Activated CD4-positive, alpha-beta memory T cell treated with anti-CD3 and anti-CD28 coated beads for 36 hours (primary cell): ENCODE measurements at regions of chr12 and their contacts with region 1.

Region 1: GRCh38 chr12:102061560-102062418 is at the start of gene WASHC3:
- DNase-seq: peak; percentile 97
- H3K4me3 Mint-ChIP-seq: peak within 1 kb of the TSS; percentile 85
- H3K27ac Mint-ChIP-seq: peak within 1 kb of the TSS; percentile 92
- H3K4me1 Mint-ChIP-seq: peaks cover 32% of the 10 kb centered on the region
- H3K27me3 Mint-ChIP-seq: no peaks in the 10 kb centered on the region
- total RNA-seq, gene WASHC3: 39.3 to 40.1 TPM

Region 2: DNA sequence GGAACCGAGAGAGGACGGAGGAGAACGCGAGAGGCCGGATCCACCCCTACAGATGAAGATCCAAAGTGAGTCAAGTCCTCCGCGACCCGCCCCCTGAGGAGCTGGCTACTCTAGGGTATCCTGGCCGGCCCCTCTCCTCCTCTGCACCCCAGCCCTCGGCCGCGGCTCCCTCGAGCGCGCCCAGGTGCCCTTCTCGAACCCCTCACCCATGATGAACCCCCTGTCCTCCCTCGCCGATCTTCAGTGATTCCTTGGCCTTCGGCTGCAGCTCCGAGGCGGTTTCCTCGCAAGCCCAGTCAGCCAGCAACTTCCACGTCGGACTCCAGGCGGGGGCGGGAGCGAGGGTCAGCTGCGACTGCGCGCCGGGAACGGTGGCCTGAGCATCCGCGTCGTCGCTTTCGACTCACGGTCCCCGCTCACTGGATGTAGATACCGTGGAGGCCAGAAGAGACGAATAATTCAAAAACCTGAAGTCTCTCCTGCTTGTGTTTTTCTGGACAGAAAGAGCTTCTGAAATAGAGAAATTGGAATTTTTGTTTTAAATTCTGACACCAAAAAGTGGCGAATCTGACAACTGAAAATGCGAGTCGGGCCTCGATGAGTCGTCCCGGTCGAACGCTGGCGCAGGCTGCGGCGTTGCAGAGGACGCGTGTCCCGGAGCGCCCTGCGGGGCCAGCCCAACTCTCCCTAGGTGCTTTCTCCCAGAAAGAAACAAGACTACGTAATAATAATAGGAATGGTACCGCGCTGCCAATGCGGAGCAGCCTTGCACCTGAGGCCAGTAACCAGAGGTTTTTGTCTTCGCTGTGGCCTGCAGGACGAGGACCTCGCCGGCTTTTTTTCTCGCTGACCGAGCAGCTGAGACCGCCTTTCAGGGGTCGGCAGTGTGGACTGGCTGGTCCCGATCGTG is 654.1 kb before region 1 on chr12 and contains the start of gene ARL1:
- CTCF ChIA-PET with region 1: no interaction called
- POLR2A ChIA-PET with region 1: no interaction called
- intact Hi-C with region 1: loop called (anchors 5 kb)
- DNase-seq: peak; percentile 86
- H3K4me3 Mint-ChIP-seq: peak within 1 kb of the TSS; percentile 99
- H3K27ac Mint-ChIP-seq: peak within 1 kb of the TSS; percentile 94
- H3K4me1 Mint-ChIP-seq: peaks cover 22% of the 10 kb centered on the region
- H3K27me3 Mint-ChIP-seq: no peaks in the 10 kb centered on the region
- total RNA-seq, gene ARL1: 63.2 to 64.1 TPM

Region 3: GRCh38 chr12:101830367-101831325 is 231.1 kb before region 1 on chr12 and contains the start of gene GNPTAB:
- CTCF ChIA-PET with region 1: no interaction called
- POLR2A ChIA-PET with region 1: no interaction called
- intact Hi-C with region 1: loop called (anchors 2 kb)
- DNase-seq: peak; percentile 97
- H3K4me3 Mint-ChIP-seq: peak within 1 kb of the TSS; percentile 96
- H3K27ac Mint-ChIP-seq: peak within 1 kb of the TSS; percentile 81
- H3K4me1 Mint-ChIP-seq: peaks cover 36% of the 10 kb centered on the region
- H3K27me3 Mint-ChIP-seq: no peaks in the 10 kb centered on the region
- total RNA-seq, gene GNPTAB: 19.6 to 20.2 TPM

Region 4: DNA sequence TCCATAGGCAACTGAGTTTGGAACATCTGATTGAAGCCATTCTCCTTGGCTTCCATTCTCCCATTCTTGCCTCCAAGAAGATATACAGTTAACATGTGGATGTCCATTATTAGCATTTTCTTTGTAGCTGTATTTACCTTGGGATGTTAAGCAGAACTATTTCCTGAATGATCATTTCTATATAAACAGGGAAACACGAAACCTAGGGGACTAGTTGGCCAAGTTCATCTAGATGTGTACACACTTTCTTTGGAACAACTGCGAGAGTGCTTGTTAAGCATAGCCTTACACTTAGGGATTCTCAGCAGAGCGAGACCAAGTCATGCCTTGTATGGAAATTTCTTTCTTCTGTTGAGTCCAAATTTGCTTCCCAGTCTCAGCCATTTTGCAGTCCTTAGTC is 142.3 kb before region 1 on chr12:
- CTCF ChIA-PET with region 1: no interaction called
- POLR2A ChIA-PET with region 1: no interaction called
- intact Hi-C with region 1: loop called (anchors 5 kb)
- DNase-seq: no peak
- H3K4me3 Mint-ChIP-seq: no peak overlapping the region
- H3K27ac Mint-ChIP-seq: no peak overlapping the region
- H3K4me1 Mint-ChIP-seq: peaks cover 6% of the 10 kb centered on the region
- H3K27me3 Mint-ChIP-seq: no peaks in the 10 kb centered on the region

Region 5: GRCh38 chr12:102016472-102016871 is 45.3 kb before region 1 on chr12:
- CTCF ChIA-PET with region 1: no interaction called
- POLR2A ChIA-PET with region 1: no interaction called
- intact Hi-C with region 1: loop called (anchors 5 kb)
- DNase-seq: no peak
- H3K4me3 Mint-ChIP-seq: no peak overlapping the region
- H3K27ac Mint-ChIP-seq: no peak overlapping the region
- H3K4me1 Mint-ChIP-seq: no peaks in the 10 kb centered on the region
- H3K27me3 Mint-ChIP-seq: no peaks in the 10 kb centered on the region

Region 6: DNA sequence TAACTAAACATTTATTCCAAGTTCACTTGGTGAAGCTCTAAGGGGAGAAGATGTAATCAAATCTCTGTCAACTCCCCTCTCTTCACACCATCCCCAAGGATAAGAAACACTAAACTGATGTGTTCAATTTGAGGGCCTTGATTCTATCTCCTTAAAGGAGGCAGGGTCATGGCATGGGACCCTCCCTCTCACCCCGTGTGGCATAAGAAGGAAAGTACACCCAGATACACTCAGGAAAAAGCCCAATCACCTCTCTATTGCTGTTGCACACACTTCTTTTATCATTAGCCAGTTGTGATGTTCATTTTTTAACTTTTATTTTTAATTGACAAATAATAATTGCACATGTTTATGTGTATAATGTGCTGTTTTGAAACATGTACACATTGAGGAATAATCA is 35.1 kb before region 1 on chr12:
- CTCF ChIA-PET with region 1: no interaction called
- POLR2A ChIA-PET with region 1: no interaction called
- intact Hi-C with region 1: no loop called
- DNase-seq: no peak
- H3K4me3 Mint-ChIP-seq: no peak overlapping the region
- H3K27ac Mint-ChIP-seq: no peak overlapping the region
- H3K4me1 Mint-ChIP-seq: no peaks in the 10 kb centered on the region
- H3K27me3 Mint-ChIP-seq: no peaks in the 10 kb centered on the region

Region 7: DNA sequence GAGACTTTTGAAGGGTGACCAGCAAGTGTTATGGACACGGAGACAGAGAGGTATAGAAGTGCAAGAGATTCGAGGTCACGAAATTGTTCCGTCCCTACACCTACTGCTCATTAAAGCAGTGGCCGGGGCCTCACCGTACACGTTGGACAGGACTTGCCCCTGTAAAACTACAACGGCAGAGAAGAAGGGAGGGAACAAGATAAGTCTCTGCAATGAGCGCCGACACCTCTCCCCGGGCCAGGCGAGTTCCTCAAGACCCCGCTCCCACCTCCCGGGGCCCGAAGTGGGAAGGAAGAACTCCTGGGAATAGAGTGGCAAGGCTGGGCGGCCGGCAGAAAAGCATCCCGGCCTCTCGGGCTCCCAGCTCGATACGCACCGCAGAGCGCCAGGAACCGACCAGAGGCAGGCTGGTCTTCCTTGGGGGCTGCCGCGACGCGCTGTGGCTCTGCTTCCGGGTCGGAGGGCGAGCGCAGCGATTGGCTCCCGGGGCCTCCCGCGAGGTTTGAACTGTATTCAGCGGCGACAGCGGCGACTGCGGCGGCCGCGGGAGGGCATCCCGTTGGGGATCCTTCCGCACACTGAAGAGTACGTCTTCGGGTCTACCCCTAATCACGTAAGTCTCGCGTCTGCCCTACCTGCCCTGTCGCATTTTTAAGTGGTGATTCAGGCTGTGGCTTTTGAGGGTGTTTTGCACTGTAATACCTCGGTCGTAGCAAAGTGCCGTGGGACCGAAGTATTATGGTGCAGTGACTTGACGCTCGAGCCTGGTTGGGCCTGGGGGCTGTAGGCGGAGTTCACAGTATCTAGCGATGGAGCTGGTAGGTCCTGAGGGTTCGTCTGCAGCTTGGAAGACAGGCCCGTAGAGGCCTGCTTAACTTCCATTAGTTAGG is 58.1 kb after region 1 on chr12 and contains the starts of genes NUP37 and PARPBP:
- CTCF ChIA-PET with region 1: no interaction called
- POLR2A ChIA-PET with region 1: interaction called, 9 read pairs
- intact Hi-C with region 1: loop called (anchors 1 kb)
- DNase-seq: peak; percentile 95
- H3K4me3 Mint-ChIP-seq: peak within 1 kb of the TSS; percentile 87
- H3K27ac Mint-ChIP-seq: peak within 1 kb of the TSS; percentile 82
- H3K4me1 Mint-ChIP-seq: peaks cover 19% of the 10 kb centered on the region
- H3K27me3 Mint-ChIP-seq: no peaks in the 10 kb centered on the region
- total RNA-seq, gene NUP37: 86.8 to 89.5 TPM
- total RNA-seq, gene PARPBP: 24.0 to 25.9 TPM

Region 8: GRCh38 chr12:103956516-103957027 is 1894.8 kb after region 1 on chr12:
- CTCF ChIA-PET with region 1: no interaction called
- POLR2A ChIA-PET with region 1: no interaction called
- intact Hi-C with region 1: loop called (anchors 5 kb)
- DNase-seq: no peak
- H3K4me3 Mint-ChIP-seq: peak overlapping the region; percentile 97
- H3K27ac Mint-ChIP-seq: peak overlapping the region; percentile 94
- H3K4me1 Mint-ChIP-seq: peaks cover 38% of the 10 kb centered on the region
- H3K27me3 Mint-ChIP-seq: no peaks in the 10 kb centered on the region